ENCODE measurements at regions of chr6 and their contacts with region 1.

Region 1: GRCh38 chr6:2634139-2634964 is 116.4 kb downstream of the MYLK4 start:
- DNase-seq: peak; percentile 96
- ATAC-seq: peak; percentile 95

Region 2: DNA sequence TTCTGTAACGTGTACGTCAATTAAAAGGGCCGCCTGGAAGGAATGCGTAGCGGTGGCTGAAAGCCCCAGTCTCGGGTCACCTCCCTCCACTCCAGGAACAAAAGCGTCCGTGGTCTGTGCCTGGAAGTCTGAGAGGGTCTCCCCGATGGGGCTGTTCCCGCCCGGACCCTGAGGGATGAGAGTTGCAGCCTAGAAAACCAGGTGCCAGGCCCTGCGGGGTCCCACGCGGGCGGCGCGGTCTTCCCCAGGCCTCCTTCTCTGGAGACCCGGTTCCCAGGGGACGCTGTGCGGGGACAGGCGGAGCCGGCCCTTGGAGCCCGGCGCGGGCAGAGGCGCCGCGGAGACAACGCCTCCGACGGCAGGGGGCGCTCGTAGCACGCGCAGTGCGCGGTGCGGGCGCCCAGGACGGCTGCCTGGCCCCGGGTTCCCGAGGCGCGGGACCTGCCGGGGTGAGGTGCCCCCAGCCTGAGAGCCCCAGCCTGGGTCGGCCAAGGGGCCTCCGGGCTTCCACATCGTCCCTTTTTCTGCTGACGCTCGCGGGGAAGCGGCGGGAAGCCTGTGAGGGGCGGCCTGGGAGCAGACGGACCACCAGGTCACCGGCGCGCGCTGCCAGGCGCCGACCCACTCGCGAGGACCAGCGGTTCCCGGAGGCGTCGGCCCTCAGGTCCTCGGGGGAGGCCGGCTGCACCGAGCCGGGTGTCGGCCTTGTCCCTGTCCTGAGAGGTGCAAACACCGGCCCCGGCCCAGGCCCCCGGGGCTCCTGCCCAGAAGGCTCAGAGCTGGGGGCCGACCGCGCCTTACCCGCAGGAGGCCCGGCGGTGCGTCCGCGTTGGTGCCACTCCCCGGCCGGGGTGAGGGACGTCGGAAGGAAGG is 1030.0 kb before region 1 on chr6:
- intact Hi-C with region 1: loop called (anchors 2 kb)
- DNase-seq: peak; percentile 89
- ATAC-seq: peak; percentile 91

Region 3: GRCh38 chr6:2353412-2354137 is 280.8 kb before region 1 on chr6:
- intact Hi-C with region 1: loop called (anchors 5 kb)
- DNase-seq: peak; percentile 69
- ATAC-seq: peak; percentile 60

Region 4: DNA sequence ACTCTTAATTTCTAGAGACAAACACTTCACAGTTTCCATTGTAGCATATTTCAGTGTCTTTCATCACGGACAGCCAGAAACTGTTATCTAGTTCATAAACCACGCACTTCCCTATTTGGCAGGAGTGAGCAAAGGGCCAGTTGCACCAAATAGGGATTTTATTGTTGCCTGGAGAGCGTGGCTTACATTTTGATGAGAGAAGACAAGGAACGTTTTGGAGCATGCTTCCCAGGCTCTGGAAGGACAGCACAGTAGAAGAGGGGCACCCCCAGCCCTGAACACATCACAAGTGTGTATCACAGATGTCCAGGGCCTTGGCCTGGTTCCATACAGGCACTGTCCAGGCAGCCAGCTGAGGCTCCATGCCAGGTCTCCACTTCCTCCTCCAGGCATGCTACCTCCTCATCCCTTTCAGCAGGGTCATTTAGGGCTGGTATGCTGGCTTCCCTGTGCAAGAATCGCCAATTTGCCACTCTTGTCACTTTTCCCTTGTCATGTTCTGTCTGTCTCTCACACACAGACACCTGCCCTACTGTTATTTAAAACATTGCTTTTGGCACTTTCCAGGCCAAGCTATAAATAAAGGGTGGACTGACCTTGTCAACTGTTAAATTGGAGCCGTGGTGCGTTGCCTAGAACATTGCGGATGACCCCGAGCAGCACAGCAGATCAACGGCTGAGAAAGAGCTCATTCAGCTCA is 153.9 kb before region 1 on chr6:
- intact Hi-C with region 1: loop called (anchors 2 kb)
- DNase-seq: no peak
- ATAC-seq: peak; percentile 90

Measured in Right ventricle myocardium inferior (tissue), 1 donor.